PC-3 (cell line): ENCODE measurements at regions of chr17 and their contacts with region 1.

Region 1: GRCh38 chr17:71864755-71865154 is 256.1 kb upstream of the SOX9 start:
- DNase-seq: no peak
- ATAC-seq: no peak
- H3K4me3 ChIP-seq: no peak overlapping the region
- H3K27ac ChIP-seq: no peak overlapping the region
- H3K4me1 ChIP-seq: no peaks in the 10 kb centered on the region
- H3K27me3 ChIP-seq: no peaks in the 10 kb centered on the region
- CTCF ChIP-seq: no peak

Region 2: DNA sequence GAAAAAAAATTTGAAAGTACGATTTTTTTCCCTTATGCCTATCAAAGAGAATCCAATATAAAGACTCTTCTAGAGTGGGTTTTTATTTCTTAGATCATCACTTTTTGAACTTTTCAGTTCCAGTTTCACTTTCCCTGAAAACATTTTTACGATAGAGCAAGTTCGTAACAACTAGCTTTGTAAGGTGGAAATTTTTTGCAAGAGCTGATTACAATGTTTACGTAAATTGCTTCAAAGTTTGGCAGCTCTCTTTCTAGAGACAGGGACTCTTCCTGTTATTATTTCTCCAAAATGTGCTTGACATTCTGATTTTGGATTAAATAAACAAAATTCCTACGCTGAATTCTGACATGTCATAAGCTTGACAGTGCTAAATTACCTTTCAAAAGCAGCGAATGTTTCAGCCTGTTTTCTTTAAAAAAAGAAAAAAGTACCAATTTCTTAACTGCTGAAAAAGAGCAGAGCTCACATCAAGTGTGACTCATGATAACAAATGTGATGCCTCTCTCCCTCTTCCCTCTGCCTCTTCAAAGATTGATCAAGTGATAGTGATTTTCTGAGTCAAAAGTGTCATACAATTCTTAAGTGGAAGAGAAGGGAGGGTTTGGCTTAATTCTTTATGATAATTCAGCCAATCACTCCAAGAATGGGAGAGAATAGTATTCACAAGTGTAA is 1520.2 kb before region 1 on chr17:
- CTCF ChIA-PET with region 1: interaction called, 10 read pairs
- POLR2A ChIA-PET with region 1: no interaction called
- intact Hi-C with region 1: no loop called
- DNase-seq: peak; percentile 26
- ATAC-seq: peak; percentile 42
- H3K4me3 ChIP-seq: peak overlapping the region; percentile 27; the same call in 1 of the 2 replicates
- H3K27ac ChIP-seq: no peak overlapping the region
- H3K4me1 ChIP-seq: 0 out of 2 replicates have a peak, but pooled peaks cover 8% of the 10 kb centered on the region
- H3K27me3 ChIP-seq: peaks cover 9% of the 10 kb centered on the region; the same call in 1 of the 2 replicates
- CTCF ChIP-seq: no peak

Region 3: DNA sequence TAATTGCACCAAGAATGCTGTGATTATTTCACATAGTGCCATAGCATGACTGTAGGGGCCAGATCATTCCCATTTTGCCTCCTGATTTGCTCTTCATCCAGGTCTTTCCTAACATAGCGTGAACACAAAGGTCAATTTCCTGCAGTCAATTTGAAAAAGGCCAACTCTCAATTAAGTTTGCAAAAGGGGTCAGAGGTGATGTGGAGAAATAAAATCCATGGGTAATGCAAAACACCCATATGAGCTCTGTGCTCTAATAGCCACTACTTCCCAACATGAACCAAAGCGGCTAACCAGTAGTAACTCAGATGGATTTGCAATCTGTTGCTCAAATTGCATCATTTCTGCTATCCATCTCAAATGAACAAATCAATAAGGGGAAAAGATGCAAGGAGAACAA is 19.4 kb before region 1 on chr17:
- CTCF ChIA-PET with region 1: no interaction called
- POLR2A ChIA-PET with region 1: no interaction called
- intact Hi-C with region 1: no loop called
- DNase-seq: no peak
- ATAC-seq: no peak
- H3K4me3 ChIP-seq: no peak overlapping the region
- H3K27ac ChIP-seq: no peak overlapping the region
- H3K4me1 ChIP-seq: no peaks in the 10 kb centered on the region
- H3K27me3 ChIP-seq: no peaks in the 10 kb centered on the region
- CTCF ChIP-seq: no peak